Right cardiac atrium (tissue), 5 donors: ENCODE measurements at regions of chr6 and their contacts with region 1.

Region 1: GRCh38 chr6:132300323-132300949 is 100.8 kb downstream of the MOXD1 start:
- DNase-seq: peak in 1 of 3 donors; percentile 38
- ATAC-seq: peak in 1 of 2 donors; percentile 63
- H3K4me3 ChIP-seq: no peak overlapping the region
- H3K27ac ChIP-seq: no peak overlapping the region
- H3K4me1 ChIP-seq: no peaks in the 10 kb centered on the region
- H3K27me3 ChIP-seq: no peaks in the 10 kb centered on the region

Region 2: GRCh38 chr6:132471788-132472187 is 171.4 kb after region 1 on chr6:
- intact Hi-C with region 1: loop called in 2 of 4 experiments (anchors 5 to 10 kb)
- DNase-seq: no peak
- ATAC-seq: no peak
- H3K4me3 ChIP-seq: no peak overlapping the region
- H3K27ac ChIP-seq: no peak overlapping the region
- H3K4me1 ChIP-seq: no peaks in the 10 kb centered on the region
- H3K27me3 ChIP-seq: no peaks in the 10 kb centered on the region